Activated CD4-positive, alpha-beta T cell treated with anti-CD3 and anti-CD28 coated beads for 36 hours (primary cell): ENCODE measurements at regions of chr5 and their contacts with region 1.

Region 1: GRCh38 chr5:170633235-170634081 is 129.6 kb downstream of the KCNIP1 start:
- DNase-seq: peak; percentile 19
- ATAC-seq: peak; percentile 30
- H3K4me3 Mint-ChIP-seq: peak overlapping the region; percentile 33
- H3K27ac Mint-ChIP-seq: no peak overlapping the region
- H3K4me1 Mint-ChIP-seq: peaks cover 15% of the 10 kb centered on the region
- H3K27me3 Mint-ChIP-seq: peaks cover 7% of the 10 kb centered on the region

Region 2: DNA sequence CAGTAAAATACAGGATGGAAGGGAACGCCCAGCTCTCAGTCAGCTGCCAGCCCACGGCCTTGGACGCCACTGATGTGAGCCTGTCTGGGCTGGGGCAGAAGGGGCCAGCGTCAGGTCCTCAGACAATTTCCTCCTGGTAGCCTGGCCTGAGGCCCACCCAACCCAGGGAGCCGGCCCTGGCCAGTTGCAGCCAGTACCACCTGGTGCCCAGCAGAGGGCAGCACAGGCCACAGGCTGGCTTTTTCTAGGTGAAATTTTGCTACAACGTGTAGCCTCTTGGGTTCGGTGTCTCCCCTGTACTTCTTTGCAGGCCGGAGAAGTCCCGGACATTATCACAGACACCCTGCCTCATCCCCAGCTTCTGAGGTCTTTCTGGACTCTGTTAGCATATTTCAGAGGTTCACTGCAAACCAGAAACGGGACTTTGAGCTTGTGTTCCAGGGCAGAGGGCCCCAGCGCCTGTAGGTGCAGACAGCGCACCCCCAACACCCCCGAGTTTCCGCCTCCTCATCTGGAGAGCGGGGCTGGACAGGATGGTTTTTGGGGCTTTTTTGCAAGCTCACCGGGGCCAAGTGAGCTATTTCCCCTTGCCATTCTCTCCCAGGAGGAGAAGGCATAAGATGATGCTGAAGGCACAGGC is 198.4 kb before region 1 on chr5:
- CTCF ChIA-PET with region 1: interaction called, 63 read pairs
- POLR2A ChIA-PET with region 1: no interaction called
- intact Hi-C with region 1: loop called (anchors 1 kb)
- DNase-seq: peak; percentile 78
- ATAC-seq: peak; percentile 76
- H3K4me3 Mint-ChIP-seq: no peak overlapping the region
- H3K27ac Mint-ChIP-seq: no peak overlapping the region
- H3K4me1 Mint-ChIP-seq: no peaks in the 10 kb centered on the region
- H3K27me3 Mint-ChIP-seq: no peaks in the 10 kb centered on the region

Region 3: DNA sequence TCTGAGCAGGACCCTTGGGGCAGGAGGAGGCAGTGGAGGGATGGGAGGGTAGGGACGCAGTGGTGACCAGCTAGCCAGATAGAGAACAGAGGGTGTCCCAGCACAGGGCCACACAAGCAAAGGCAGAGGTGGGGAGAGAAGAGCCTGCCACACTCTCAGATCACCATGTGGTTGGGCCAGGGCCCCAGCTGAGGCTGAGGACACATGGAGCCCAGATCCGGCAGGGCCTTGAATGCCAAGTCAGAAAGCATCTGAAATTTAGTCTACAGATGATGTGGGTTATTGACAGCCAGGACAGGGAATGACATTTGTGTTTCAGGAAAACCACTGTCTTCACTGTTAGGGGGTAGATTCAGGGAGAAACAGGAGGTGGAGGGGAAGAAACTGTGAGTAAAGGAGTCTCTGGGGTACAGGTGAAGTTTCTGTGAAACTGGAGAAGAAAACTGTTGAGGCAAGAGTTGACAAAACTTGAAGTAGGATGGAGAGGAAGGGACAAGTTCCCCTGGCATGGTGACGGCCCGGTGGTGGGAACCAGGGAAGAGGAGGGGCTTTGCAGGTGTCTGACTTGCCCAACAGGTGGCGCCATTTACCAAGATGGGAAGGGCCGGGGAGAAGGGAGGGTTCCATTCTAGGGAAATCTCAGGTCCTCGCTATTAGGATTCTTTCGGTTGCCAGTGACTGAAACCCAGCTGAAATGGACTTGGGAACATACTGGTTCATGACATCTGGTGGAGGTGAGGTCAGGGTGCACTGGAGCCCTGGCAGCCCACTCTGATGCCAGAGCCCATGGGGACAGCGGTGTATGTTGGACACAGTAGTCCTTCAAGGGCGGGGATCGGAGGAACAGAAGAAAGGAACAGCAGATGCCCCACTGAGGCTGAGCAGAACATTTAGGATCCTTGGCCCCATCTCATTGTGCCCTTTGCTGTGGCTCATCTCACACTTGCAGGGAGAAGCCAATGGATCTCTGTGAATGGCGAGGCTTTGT is 29.6 kb before region 1 on chr5:
- CTCF ChIA-PET with region 1: interaction called, 9 read pairs
- POLR2A ChIA-PET with region 1: no interaction called
- intact Hi-C with region 1: loop called (anchors 1 to 2 kb)
- DNase-seq: peak; percentile 81
- ATAC-seq: peak; percentile 88
- H3K4me3 Mint-ChIP-seq: no peak overlapping the region
- H3K27ac Mint-ChIP-seq: no peak overlapping the region
- H3K4me1 Mint-ChIP-seq: peaks cover under 1% of the 10 kb centered on the region
- H3K27me3 Mint-ChIP-seq: peaks cover 33% of the 10 kb centered on the region